ENCODE measurements at regions of chr3 and their contacts with region 1.

Region 1: DNA sequence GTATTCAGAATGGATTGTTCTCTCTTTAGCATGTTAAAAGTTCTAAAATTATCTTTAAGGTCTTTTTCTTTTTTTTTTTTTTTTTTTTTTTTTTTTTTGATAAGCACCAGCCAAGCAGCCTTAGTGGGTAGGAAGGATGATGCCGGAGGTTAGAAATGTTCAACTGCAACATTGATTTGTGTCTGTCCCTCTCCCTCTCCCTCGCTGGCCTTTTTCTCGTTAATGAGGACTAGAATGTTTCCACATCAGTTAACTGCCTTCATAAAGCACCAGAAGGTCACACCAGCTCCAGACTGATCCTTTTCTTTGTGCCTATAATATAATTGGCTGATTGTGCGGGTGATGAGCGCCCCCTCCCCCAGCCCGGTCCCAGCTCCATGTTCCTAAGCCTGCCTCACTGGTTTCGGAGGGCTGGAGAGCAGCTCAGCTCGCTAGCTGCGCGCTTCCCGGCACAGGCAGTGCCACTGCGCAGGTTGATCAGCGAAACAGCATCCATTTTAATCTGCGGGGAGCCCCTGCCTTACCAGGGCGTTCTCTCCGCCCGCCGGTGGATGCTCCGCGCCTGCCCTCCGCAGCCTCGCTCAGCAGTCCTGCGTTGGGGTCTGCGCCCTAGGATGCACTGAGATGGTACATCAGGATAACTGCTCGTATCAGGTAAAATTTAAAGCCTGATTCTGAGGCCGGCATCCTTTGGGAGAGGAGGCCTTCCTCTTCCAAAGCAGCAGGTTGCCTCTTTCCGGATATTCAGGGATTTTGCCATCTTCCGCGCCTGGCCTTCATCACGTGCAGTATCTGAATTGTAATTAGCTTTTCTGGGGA is 148.9 kb upstream of the IL12A start:
- DNase-seq: no peak
- H3K4me3 Mint-ChIP-seq: peak within 1 kb of the TSS; percentile 66
- H3K27ac Mint-ChIP-seq: peak within 1 kb of the TSS; percentile 27
- H3K4me1 Mint-ChIP-seq: peaks cover 25% of the 10 kb centered on the region
- H3K27me3 Mint-ChIP-seq: no peaks in the 10 kb centered on the region
- CTCF ChIP-seq: no peak

Region 2: GRCh38 chr3:159787191-159787590 is 52.6 kb before region 1 on chr3:
- CTCF ChIA-PET with region 1: interaction called, 3 read pairs
- POLR2A ChIA-PET with region 1: interaction called, 10 read pairs
- intact Hi-C with region 1: no loop called
- DNase-seq: peak; percentile 94
- H3K4me3 Mint-ChIP-seq: peak overlapping the region; percentile 47
- H3K27ac Mint-ChIP-seq: peak overlapping the region; percentile 89
- H3K4me1 Mint-ChIP-seq: peaks cover 55% of the 10 kb centered on the region
- H3K27me3 Mint-ChIP-seq: no peaks in the 10 kb centered on the region
- CTCF ChIP-seq: no peak

Region 3: DNA sequence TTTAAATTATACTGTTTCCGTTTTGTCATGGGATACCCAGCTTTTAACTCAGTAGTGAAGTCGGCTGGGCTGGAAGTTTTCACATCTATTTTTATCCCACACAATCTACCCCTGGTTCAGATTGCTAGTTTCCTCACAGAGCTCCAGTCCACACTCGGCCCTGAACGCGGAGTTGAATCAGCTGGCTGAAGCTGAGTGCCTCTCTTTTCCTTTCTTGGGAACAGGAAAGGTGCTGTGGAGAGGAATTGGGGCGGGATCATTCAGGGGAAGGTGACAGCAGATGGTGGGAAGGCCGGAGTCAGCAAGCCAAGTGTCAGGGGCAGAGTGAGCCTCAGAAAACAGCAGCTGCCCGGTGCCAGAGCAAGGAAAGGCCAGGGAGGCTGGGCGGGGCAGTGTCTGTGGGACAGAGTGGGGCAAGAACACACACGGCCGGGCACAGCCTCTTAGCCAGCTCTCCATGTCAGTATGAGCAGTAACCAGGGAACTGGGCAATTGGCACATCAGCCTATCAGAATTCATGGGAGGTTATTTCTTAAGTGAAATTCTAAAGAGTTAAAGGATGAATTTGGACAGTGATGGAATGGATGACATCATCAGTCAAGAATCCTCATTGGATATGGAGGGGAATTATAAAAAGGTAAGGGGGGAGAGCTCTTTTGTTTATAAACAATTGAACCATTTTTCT is 13.2 kb after region 1 on chr3:
- CTCF ChIA-PET with region 1: interaction called, 49 read pairs
- POLR2A ChIA-PET with region 1: interaction called, 181 read pairs
- intact Hi-C with region 1: no loop called
- DNase-seq: peak; percentile 57
- H3K4me3 Mint-ChIP-seq: peak overlapping the region; percentile 66
- H3K27ac Mint-ChIP-seq: peak overlapping the region; percentile 92
- H3K4me1 Mint-ChIP-seq: peaks cover 38% of the 10 kb centered on the region
- H3K27me3 Mint-ChIP-seq: no peaks in the 10 kb centered on the region
- CTCF ChIP-seq: no peak

Region 4: DNA sequence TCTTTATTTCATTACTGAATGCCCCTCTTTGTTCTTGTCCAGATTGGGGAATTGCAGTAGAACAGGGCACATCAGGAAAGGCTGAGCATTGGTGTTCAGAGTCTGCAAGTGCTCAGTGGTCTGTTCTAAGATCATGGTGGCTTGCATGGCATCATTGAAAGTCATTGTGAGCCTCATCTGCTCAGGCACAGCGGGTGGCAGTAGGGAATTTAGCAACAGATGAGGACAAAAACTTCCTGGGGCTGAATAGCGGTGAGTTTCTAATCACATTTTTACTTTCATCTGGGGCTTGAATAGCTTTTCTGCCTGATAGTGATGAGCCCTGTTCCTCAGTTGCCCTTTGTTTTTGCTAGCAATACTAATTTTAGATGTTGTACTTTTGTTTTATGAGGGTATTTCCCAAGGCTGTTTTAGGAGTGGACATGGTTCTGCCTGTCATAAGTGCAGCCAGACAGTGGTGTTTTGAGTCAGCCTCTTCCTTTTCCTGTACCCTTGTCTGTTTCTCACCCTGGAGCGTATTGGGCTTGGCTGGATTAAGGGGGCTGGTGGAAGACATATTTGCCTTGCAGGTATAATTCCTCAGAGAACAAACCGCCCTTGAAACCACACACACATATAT is 21.7 kb after region 1 on chr3:
- CTCF ChIA-PET with region 1: interaction called, 3 read pairs
- POLR2A ChIA-PET with region 1: interaction called, 10 read pairs
- intact Hi-C with region 1: no loop called
- DNase-seq: no peak
- H3K4me3 Mint-ChIP-seq: no peak overlapping the region
- H3K27ac Mint-ChIP-seq: peak overlapping the region; percentile 65
- H3K4me1 Mint-ChIP-seq: peaks cover 42% of the 10 kb centered on the region
- H3K27me3 Mint-ChIP-seq: no peaks in the 10 kb centered on the region
- CTCF ChIP-seq: no peak

Region 5: GRCh38 chr3:159872374-159873109 is 32.8 kb after region 1 on chr3:
- CTCF ChIA-PET with region 1: interaction called, 7 read pairs
- POLR2A ChIA-PET with region 1: interaction called, 37 read pairs
- intact Hi-C with region 1: no loop called
- DNase-seq: peak; percentile 89
- H3K4me3 Mint-ChIP-seq: no peak overlapping the region
- H3K27ac Mint-ChIP-seq: peak overlapping the region; percentile 84
- H3K4me1 Mint-ChIP-seq: peaks cover 22% of the 10 kb centered on the region
- H3K27me3 Mint-ChIP-seq: no peaks in the 10 kb centered on the region
- CTCF ChIP-seq: peak; percentile 12

Region 6: GRCh38 chr3:160725338-160725737 is 885.6 kb after region 1 on chr3:
- CTCF ChIA-PET with region 1: no interaction called
- POLR2A ChIA-PET with region 1: no interaction called
- intact Hi-C with region 1: no loop called
- DNase-seq: no peak
- H3K4me3 Mint-ChIP-seq: no peak overlapping the region
- H3K27ac Mint-ChIP-seq: no peak overlapping the region
- H3K4me1 Mint-ChIP-seq: no peaks in the 10 kb centered on the region
- H3K27me3 Mint-ChIP-seq: no peaks in the 10 kb centered on the region
- CTCF ChIP-seq: no peak

Measured in MCF 10A (cell line).